Heart right ventricle (tissue), 16 donors: ENCODE measurements at regions of chr17 and their contacts with region 1.

Region 1: GRCh38 chr17:68613739-68614298 is 12.7 kb upstream of the FAM20A start:
- DNase-seq: peak in 1 of 2 donors; percentile 71
- ATAC-seq: peak in 5 of 8 donors; percentile 52 to 77 (median 70)
- H3K4me3 ChIP-seq: no peak overlapping the region
- H3K27ac ChIP-seq: no peak overlapping the region
- H3K4me1 ChIP-seq: no peaks in the 10 kb centered on the region
- H3K27me3 ChIP-seq: no peaks in the 10 kb centered on the region
- CTCF ChIP-seq: peak in 8 of 9 donors; percentile 46 to 76 (median 70)

Region 2: GRCh38 chr17:68533887-68534694 is 79.7 kb before region 1 on chr17:
- intact Hi-C with region 1: no loop called
- DNase-seq: no peak
- ATAC-seq: no peak
- H3K4me3 ChIP-seq: no peak overlapping the region
- H3K27ac ChIP-seq: peak overlapping the region in 5 of 10 donors; percentile 11 to 59 (median 23)
- H3K4me1 ChIP-seq: peaks cover 0 to 70% (median 11%) of the 10 kb centered on the region in 9 donors
- H3K27me3 ChIP-seq: no peaks in the 10 kb centered on the region
- CTCF ChIP-seq: peak in 7 of 9 donors; percentile 6 to 47 (median 43)

Region 3: DNA sequence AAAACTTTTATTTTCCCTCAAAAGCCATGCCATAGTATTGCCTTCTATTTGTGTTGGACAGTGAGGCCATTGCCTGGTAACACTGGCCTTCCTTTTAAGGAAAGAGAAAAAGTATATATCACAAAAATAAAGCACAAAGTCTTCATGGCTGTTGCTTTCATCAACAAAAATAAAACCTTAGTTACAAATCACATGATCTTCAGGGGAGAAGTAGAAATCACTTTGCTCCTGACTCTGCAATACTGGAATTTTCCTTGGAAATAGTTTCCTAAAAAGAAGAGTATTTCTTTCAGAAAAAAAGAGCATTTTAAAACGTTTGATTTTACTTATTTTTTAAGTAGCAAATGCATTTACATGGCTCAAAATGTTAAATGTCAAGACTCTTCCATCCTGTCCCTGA is 54.5 kb before region 1 on chr17:
- intact Hi-C with region 1: loop called in 1 of 10 experiments (anchors 10 kb)
- DNase-seq: no peak
- ATAC-seq: no peak
- H3K4me3 ChIP-seq: no peak overlapping the region
- H3K27ac ChIP-seq: no peak overlapping the region
- H3K4me1 ChIP-seq: peaks cover 0 to 27% (median 17%) of the 10 kb centered on the region in 9 donors
- H3K27me3 ChIP-seq: no peaks in the 10 kb centered on the region
- CTCF ChIP-seq: no peak

Region 4: GRCh38 chr17:68576811-68577496 is 36.9 kb before region 1 on chr17:
- intact Hi-C with region 1: no loop called
- DNase-seq: peak; percentile 21 to 45
- ATAC-seq: peak; percentile 73 to 85 (median 78)
- H3K4me3 ChIP-seq: no peak overlapping the region
- H3K27ac ChIP-seq: peak overlapping the region in 8 of 10 donors; percentile 7 to 89 (median 50)
- H3K4me1 ChIP-seq: peaks cover 0 to 72% (median 4%) of the 10 kb centered on the region in 9 donors
- H3K27me3 ChIP-seq: no peaks in the 10 kb centered on the region
- CTCF ChIP-seq: peak in 2 of 9 donors; percentile 10 to 12